ENCODE measurements at regions of chrX and their contacts with region 1.

Region 1: DNA sequence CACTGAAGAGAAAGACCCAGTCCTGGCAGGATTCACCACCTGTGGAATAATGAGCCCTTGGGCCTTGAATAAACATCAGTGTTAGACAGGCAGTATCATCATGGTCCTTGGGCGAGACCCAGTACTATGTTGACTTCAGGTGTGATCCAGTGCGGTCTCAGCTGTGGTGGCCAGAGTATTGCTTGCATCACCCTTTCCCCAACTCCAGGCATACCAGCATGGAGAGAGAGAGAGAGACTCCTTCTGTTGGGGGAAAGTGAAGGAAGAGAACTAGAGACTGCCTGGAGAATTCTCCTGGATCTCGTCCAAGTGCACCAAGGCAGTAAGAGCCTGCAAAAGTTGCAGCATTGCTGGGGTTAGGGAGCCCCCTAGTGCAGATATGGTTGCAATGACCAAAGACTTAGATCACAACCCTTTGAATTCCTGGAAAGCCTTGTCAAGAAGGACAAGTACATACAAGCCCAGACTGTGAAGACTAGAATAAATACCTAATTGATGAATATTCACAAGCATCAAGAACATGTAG is 61.1 kb upstream of the VAMP7 start:
- DNase-seq: peak; percentile 91
- H3K4me3 Mint-ChIP-seq: no peak overlapping the region
- H3K27ac Mint-ChIP-seq: no peak overlapping the region
- H3K4me1 Mint-ChIP-seq: peaks cover 6% of the 10 kb centered on the region
- H3K27me3 Mint-ChIP-seq: no peaks in the 10 kb centered on the region
- CTCF ChIP-seq: peak; percentile 61

Region 2: DNA sequence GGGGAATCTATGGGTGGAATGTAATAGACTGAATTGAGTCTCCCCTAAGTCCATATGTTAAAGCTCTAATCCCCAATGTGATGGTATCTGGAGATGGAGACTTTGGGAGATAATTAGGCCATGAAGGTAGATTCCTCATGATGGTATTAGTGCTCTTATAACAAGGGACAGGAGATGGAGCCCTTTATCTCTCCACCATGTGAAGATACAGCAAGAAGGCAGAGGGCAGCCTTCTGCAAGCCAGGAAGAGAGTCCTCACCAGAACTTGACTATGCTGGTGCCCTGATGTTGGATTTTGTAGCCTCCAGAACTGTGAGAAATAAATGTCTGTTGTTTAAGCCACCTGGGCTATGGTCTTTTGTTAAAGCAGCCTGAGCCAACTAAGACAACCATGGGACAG is 285.2 kb before region 1 on chrX:
- CTCF ChIA-PET with region 1: no interaction called
- POLR2A ChIA-PET with region 1: no interaction called
- intact Hi-C with region 1: loop called (anchors 2 kb)
- DNase-seq: no peak
- H3K4me3 Mint-ChIP-seq: no peak overlapping the region
- H3K27ac Mint-ChIP-seq: no peak overlapping the region
- H3K4me1 Mint-ChIP-seq: no peaks in the 10 kb centered on the region
- H3K27me3 Mint-ChIP-seq: no peaks in the 10 kb centered on the region
- CTCF ChIP-seq: no peak

Measured in MCF 10A (cell line).